Common myeloid progenitor, CD34-positive (primary cell): ENCODE measurements at regions of chr2 and their contacts with region 1.

Region 1: GRCh38 chr2:161265874-161266273 is 42.4 kb upstream of the PSMD14 start:
- DNase-seq: no peak
- H3K4me3 ChIP-seq: no peak overlapping the region
- H3K27ac ChIP-seq: no peak overlapping the region
- H3K4me1 ChIP-seq: no peaks in the 10 kb centered on the region
- H3K27me3 ChIP-seq: no peaks in the 10 kb centered on the region

Region 2: DNA sequence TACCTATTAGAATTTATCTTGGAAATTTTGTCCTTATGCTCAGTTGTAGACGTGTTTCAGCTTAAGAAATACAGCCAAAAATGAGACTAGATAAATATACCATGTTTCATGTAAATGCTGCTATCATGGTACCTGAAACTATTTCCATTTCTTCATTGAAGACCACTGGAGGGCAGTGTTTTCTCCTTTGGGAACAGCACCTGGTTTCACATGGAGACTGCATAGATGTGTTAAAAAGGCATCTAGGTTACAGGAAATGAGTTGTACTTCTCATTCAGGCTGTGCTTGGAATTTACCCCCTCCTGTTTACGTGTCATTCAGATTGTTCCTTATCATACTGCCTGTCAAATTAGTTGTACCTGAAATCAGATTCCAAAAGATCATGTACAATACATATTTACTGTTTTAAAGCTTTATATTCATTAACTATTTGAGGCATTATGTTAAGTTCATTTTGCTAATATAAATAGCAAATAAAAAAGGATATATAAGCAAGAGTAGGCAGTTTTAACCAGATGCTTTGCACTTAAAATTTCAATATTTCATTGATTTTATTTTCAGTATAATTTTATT is 14.9 kb before region 1 on chr2:
- CTCF ChIA-PET with region 1: interaction called, 11 read pairs
- POLR2A ChIA-PET with region 1: no interaction called
- DNase-seq: peak; percentile 52 to 70 (median 58)
- H3K4me3 ChIP-seq: no peak overlapping the region
- H3K27ac ChIP-seq: no peak overlapping the region
- H3K4me1 ChIP-seq: peaks cover 0 to 2% (median 0%) of the 10 kb centered on the region in 4 experiments
- H3K27me3 ChIP-seq: peaks cover 0 to 7% (median 0%) of the 10 kb centered on the region in 5 experiments

Region 3: DNA sequence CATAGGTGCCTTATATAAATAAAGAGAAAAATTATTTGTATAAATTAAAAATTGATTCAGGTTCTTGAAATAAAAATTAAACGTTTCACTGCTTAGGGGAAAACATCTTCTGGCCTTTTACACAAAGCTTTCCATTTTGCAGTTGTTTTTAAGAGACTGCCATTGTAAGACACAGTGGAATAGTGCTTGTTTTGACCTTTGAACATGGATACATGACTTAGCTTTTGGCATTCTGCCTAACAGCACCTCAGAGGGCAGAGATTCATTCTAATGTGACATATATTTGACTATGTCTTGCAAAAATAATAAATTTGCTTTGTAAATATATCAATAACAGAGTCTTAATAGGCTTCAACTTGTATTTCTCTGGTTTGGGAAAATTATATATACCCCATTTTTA is 500.5 kb after region 1 on chr2:
- CTCF ChIA-PET with region 1: no interaction called
- POLR2A ChIA-PET with region 1: no interaction called
- DNase-seq: no peak
- H3K4me3 ChIP-seq: no peak overlapping the region
- H3K27ac ChIP-seq: no peak overlapping the region
- H3K4me1 ChIP-seq: no peaks in the 10 kb centered on the region
- H3K27me3 ChIP-seq: no peaks in the 10 kb centered on the region

Region 4: DNA sequence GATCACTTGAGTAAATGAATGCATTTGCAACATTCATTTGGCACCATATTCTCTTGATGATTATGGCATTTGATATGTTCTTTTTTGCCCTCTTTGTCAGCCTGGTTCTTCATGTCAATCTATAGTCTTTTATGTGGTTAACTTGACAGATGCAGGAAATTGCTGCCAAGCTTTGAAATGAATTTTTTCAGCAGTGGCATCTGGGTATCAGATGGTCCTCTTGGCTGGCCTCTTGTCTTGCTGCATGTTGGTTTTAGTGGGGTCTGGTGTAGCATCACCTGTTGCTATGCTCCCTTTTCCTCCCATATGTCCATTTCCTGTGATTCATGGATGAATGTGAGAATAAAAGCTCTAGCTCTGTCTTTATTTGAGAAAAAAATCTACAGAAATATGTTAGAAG is 688.2 kb after region 1 on chr2:
- CTCF ChIA-PET with region 1: no interaction called
- POLR2A ChIA-PET with region 1: no interaction called
- DNase-seq: peak; percentile 6 to 65 (median 58)
- H3K4me3 ChIP-seq: no peak overlapping the region
- H3K27ac ChIP-seq: no peak overlapping the region
- H3K4me1 ChIP-seq: peaks cover 0 to 17% (median 3%) of the 10 kb centered on the region in 4 experiments
- H3K27me3 ChIP-seq: no peaks in the 10 kb centered on the region